ENCODE measurements at regions of chr22 and their contacts with region 1.

Region 1: DNA sequence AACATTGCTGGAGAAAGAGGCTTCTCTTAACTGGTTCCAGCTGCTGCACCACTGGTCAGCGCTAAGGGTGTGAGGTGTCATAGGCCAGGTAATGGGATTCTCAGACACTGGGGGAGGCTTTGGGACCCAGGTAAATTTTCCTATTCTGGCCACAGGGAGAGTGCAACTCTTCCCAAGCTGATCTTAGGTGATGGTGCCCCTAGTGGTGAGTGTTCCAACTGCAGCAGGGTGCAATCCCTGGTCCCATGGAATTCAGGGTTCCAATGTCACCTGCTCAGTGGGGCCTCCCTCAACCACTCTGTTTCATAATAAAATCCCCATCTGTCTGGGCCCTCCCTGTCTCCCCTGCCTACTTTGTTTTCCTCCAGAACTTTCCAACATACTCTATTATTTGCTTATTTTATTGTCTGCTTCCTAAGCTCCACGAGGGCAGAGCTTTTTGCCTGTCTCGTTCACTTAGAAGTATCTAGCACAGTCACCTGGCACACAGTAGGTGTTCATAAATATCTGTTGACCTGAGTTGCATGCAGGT is 2.9 kb upstream of the SGSM1 start:
- DNase-seq: peak; percentile 76
- H3K4me3 Mint-ChIP-seq: no peak overlapping the region
- H3K27ac Mint-ChIP-seq: no peak overlapping the region
- H3K4me1 Mint-ChIP-seq: peaks cover 12% of the 10 kb centered on the region
- H3K27me3 Mint-ChIP-seq: no peaks in the 10 kb centered on the region

Region 2: DNA sequence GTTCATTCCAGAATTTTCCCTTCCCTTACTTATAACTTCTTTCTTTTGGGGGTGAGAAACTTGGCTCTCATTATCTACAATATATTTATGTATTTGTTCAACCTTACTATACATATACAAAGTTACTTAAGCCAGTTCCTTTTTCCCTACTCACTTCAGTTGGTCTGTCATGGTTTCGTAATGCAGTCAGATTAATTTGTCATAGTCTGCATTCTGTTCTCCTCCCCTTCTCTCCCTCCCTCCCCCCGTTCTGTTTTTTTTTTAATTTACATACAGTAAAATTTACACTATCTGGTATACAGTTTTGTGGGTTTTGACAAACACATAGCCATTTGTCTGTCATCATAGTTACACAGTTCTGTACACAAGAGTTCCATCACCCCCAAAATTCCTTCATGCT is 447.5 kb before region 1 on chr22:
- CTCF ChIA-PET with region 1: no interaction called
- intact Hi-C with region 1: no loop called
- DNase-seq: no peak
- H3K4me3 Mint-ChIP-seq: no peak overlapping the region
- H3K27ac Mint-ChIP-seq: no peak overlapping the region
- H3K4me1 Mint-ChIP-seq: no peaks in the 10 kb centered on the region
- H3K27me3 Mint-ChIP-seq: no peaks in the 10 kb centered on the region

Region 3: GRCh38 chr22:24768537-24769374 is 34.3 kb before region 1 on chr22:
- CTCF ChIA-PET with region 1: interaction called, 6 read pairs
- intact Hi-C with region 1: loop called (anchors 2 kb)
- DNase-seq: peak; percentile 68
- H3K4me3 Mint-ChIP-seq: no peak overlapping the region
- H3K27ac Mint-ChIP-seq: no peak overlapping the region
- H3K4me1 Mint-ChIP-seq: no peaks in the 10 kb centered on the region
- H3K27me3 Mint-ChIP-seq: peaks cover under 1% of the 10 kb centered on the region

Region 4: GRCh38 chr22:24812950-24813775 is 10.1 kb after region 1 on chr22:
- CTCF ChIA-PET with region 1: interaction called, 11 read pairs
- intact Hi-C with region 1: no loop called
- DNase-seq: no peak
- H3K4me3 Mint-ChIP-seq: no peak overlapping the region
- H3K27ac Mint-ChIP-seq: no peak overlapping the region
- H3K4me1 Mint-ChIP-seq: peaks cover 2% of the 10 kb centered on the region
- H3K27me3 Mint-ChIP-seq: no peaks in the 10 kb centered on the region

Measured in activated naive CD4-positive, alpha-beta T cell treated with anti-CD3 and anti-CD28 coated beads for 36 hours (primary cell).